Activated naive CD4-positive, alpha-beta T cell treated with anti-CD3 and anti-CD28 coated beads, Interleukin-2, amount 10 ng/mL, durations not matched to agents 7 days and 5 days (primary cell): ENCODE measurements at regions of chr13 and their contacts with region 1.

Region 1: DNA sequence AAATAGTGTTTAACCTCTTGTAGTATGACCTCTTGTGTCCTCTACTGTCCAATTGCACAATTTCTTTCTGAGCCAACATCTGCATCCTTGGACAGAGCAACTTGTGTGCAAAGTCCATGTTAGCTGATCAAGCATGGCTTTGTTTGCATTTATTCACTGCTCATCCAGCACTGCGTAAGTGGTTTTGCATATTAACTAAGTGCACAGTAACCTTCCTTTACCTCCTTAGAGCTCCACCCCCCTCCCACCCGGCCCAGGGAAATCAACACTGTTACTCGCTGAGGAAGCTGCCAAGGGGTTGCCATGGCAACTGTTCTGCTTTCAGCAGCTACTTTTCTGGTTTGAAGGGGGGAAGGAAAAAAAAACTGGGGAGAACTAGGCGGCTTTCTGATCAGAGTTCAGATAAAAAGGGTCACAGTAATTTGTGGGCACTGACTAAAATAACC is 153.5 kb upstream of the KLF12 start:
- DNase-seq: peak; percentile 88
- H3K4me3 Mint-ChIP-seq: peak overlapping the region; percentile 57
- H3K27ac Mint-ChIP-seq: peak overlapping the region; percentile 88
- H3K4me1 Mint-ChIP-seq: peaks cover 48% of the 10 kb centered on the region
- H3K27me3 Mint-ChIP-seq: peaks cover 3% of the 10 kb centered on the region

Region 2: DNA sequence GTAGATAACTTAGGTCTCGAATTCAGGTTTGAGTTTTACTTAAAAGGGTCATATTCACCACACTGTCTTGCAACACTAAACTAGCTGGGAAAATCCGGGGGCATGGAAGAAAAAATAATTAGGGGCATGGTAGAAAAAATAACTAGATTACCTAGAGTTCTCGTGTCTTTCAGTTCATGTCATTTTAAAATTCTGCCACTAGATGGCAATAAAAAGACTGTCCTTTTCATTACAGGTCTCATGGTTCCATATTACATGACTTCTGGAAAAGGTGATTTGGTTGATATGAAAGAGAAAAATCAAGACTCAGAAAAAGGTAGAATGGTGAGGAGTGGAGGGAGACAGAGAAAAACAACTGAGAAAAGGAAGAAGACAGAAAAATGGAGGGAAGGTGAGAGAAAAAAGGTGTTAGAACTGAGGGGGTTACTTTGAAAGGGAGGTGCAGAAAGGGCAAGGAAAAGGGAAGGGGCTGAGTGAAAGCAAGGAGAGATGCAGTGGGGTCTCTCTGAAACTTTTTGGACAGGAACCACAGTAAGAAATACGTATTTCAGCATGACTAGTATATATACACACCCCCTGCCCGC is 452.5 kb before region 1 on chr13:
- CTCF ChIA-PET with region 1: interaction called, 23 read pairs
- DNase-seq: no peak
- H3K4me3 Mint-ChIP-seq: no peak overlapping the region
- H3K27ac Mint-ChIP-seq: no peak overlapping the region
- H3K4me1 Mint-ChIP-seq: peaks cover 9% of the 10 kb centered on the region
- H3K27me3 Mint-ChIP-seq: no peaks in the 10 kb centered on the region

Region 3: DNA sequence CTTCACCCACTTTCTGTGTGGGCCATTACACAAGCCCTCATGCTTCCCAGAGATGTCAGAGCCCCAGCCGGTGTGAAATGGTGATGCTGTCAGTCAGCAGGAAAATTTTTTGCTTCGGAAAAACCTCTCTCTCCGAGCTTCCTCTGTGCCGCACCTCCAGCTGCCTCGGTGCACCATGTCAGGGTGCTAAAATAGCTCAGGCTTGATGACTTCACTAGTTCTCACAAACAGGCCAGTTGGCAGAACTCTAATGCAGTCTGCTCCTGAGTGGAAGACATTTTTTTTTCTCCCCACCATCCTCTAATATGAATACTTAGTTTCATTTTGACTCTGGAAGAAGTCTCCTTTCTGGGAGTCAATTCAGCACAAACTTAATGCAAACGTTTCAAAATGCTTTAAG is 224.8 kb before region 1 on chr13:
- CTCF ChIA-PET with region 1: interaction called, 20 read pairs
- DNase-seq: peak; percentile 40
- H3K4me3 Mint-ChIP-seq: peak overlapping the region; percentile 75
- H3K27ac Mint-ChIP-seq: peak overlapping the region; percentile 91
- H3K4me1 Mint-ChIP-seq: peaks cover 86% of the 10 kb centered on the region
- H3K27me3 Mint-ChIP-seq: no peaks in the 10 kb centered on the region

Region 4: DNA sequence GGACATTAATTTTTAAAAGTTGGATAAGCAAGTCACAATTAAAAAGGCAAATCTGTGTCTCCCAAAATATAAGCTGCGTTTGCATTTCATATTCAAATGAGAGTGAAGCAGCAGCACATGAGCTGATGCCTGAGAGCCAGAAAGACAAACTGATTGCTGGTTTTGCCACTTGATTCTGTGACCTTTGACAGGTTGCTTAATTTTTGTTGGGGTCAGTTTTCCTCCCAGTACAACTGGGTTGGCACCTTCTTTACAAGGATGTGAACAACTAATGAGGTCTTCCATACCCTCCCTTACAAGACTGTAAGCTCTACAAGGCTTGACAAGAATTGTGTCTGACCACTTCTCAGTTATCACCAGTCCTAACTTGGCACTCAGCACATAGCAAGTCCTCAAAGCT is 145.5 kb before region 1 on chr13:
- CTCF ChIA-PET with region 1: interaction called, 12 read pairs
- DNase-seq: no peak
- H3K4me3 Mint-ChIP-seq: no peak overlapping the region
- H3K27ac Mint-ChIP-seq: no peak overlapping the region
- H3K4me1 Mint-ChIP-seq: no peaks in the 10 kb centered on the region
- H3K27me3 Mint-ChIP-seq: peaks cover 9% of the 10 kb centered on the region